Natural killer cell (primary cell): ENCODE measurements at regions of chr22 and their contacts with region 1.

Region 1: GRCh38 chr22:22884010-22884887 is 3.4 kb upstream of the IGLL5 start:
- DNase-seq: peak; percentile 67 to 89
- ATAC-seq: peak; percentile 74 to 95 (median 93)
- H3K4me3 ChIP-seq: no peak overlapping the region
- H3K4me3 Mint-ChIP-seq: no peak overlapping the region
- H3K27ac ChIP-seq: no peak overlapping the region
- H3K27ac Mint-ChIP-seq: peak overlapping the region in 1 of 2 donors; percentile 58
- H3K4me1 ChIP-seq: peaks cover 37% of the 10 kb centered on the region
- H3K4me1 Mint-ChIP-seq: peaks cover 17 to 29% of the 10 kb centered on the region in 2 donors
- H3K27me3 ChIP-seq: peaks cover 4% of the 10 kb centered on the region
- H3K27me3 Mint-ChIP-seq: no peaks in the 10 kb centered on the region
- CTCF ChIP-seq: peak; percentile 82

Region 2: DNA sequence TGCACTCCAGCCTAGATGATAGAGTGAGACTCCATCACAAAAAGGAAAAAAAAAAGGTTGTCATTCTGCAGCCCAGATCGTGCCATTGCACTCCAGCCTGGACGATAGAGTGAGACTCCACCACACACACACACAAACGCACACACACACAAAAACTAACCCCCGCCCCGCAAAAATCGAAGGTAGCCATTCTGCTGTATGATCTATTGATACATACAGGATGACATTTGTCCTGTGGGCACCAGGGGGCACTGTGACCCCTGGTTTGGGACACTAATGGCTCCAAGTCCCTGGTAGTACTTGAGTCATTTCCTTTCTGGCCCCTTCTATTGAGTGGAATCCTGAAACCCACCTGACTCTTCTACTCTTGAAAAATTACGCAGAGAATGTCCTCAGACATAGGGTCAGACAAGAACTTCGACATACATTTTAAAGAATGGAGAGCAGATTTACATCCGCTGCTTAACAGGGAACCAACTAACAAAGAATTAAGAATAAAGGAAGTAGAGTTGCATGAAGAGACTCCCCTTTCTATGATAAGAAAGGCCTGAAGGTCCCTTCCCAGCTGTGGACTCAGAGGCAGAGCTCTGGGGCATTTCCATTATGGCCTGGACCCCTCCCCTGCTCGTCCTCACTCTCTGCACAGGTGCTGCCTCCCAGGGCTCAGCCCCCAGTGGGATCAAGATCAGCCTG is 290.1 kb before region 1 on chr22:
- intact Hi-C with region 1: loop called (anchors 2 kb)
- DNase-seq: peak; percentile 50 to 80
- ATAC-seq: peak; percentile 67 to 88 (median 82)
- H3K4me3 ChIP-seq: no peak overlapping the region
- H3K4me3 Mint-ChIP-seq: no peak overlapping the region
- H3K27ac ChIP-seq: no peak overlapping the region
- H3K27ac Mint-ChIP-seq: no peak overlapping the region
- H3K4me1 ChIP-seq: no peaks in the 10 kb centered on the region
- H3K4me1 Mint-ChIP-seq: peaks cover 6% of the 10 kb centered on the region in 2 donors
- H3K27me3 ChIP-seq: no peaks in the 10 kb centered on the region
- H3K27me3 Mint-ChIP-seq: peaks cover 0 to 4% of the 10 kb centered on the region in 2 donors
- CTCF ChIP-seq: peak; percentile 76

Region 3: GRCh38 chr22:22710719-22711531 is 173.3 kb before region 1 on chr22:
- intact Hi-C with region 1: loop called (anchors 1 kb)
- DNase-seq: peak; percentile 82 to 86
- ATAC-seq: peak; percentile 57 to 82 (median 81)
- H3K4me3 ChIP-seq: no peak overlapping the region
- H3K4me3 Mint-ChIP-seq: peak overlapping the region; percentile 55
- H3K27ac ChIP-seq: no peak overlapping the region
- H3K27ac Mint-ChIP-seq: peak overlapping the region; percentile 8 to 60
- H3K4me1 ChIP-seq: peaks cover 23% of the 10 kb centered on the region
- H3K4me1 Mint-ChIP-seq: peaks cover 0 to 14% of the 10 kb centered on the region in 2 donors
- H3K27me3 ChIP-seq: no peaks in the 10 kb centered on the region
- H3K27me3 Mint-ChIP-seq: no peaks in the 10 kb centered on the region
- CTCF ChIP-seq: peak; percentile 99

Region 4: GRCh38 chr22:22748297-22748743 is 135.9 kb before region 1 on chr22:
- intact Hi-C with region 1: loop called (anchors 1 kb)
- DNase-seq: peak; percentile 31 to 77
- ATAC-seq: peak in 2 of 3 donors; percentile 65 to 80
- H3K4me3 ChIP-seq: no peak overlapping the region
- H3K4me3 Mint-ChIP-seq: peak overlapping the region; percentile 75
- H3K27ac ChIP-seq: no peak overlapping the region
- H3K27ac Mint-ChIP-seq: peak overlapping the region; percentile 75 to 82
- H3K4me1 ChIP-seq: peaks cover 50% of the 10 kb centered on the region
- H3K4me1 Mint-ChIP-seq: peaks cover 54 to 56% of the 10 kb centered on the region in 2 donors
- H3K27me3 ChIP-seq: no peaks in the 10 kb centered on the region
- H3K27me3 Mint-ChIP-seq: peaks cover 0 to 2% of the 10 kb centered on the region in 2 donors
- CTCF ChIP-seq: peak; percentile 84

Region 5: DNA sequence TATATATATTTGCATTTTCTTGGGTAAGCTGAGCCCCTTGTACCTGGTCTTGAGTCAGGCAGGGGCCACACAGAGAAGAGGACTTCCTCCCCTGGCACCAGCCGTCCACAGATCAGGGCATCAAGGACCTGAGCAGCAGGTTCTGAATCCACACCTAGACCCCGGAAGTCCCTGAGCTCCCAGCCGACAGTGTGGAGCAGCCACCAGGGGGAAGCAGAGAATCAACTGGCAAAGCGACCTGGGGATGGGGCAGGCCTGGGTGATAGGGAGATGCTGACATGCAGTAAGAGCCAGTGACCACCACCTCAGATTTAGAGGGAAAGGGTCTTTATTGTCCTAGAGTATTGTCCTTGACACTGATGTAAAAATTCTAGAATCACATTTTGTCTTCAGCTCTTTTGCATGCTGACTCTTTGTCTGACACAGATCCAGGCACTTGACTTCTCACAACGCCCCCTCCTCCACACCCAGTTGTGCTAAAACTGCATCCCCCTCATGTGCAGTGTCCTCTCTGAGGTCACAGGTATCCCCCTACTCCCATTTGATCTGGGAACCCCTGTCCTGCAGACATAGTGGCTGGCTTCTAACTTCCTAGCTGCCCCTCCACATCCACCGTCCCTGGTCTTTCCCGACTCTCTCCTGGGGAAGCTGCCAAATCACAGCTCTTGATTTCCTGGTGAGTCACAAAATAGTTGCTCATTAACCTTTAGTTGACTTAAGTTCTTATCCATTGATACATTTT is 130.6 kb before region 1 on chr22:
- intact Hi-C with region 1: loop called (anchors 1 kb)
- DNase-seq: peak; percentile 73 to 91
- ATAC-seq: peak; percentile 81 to 88 (median 88)
- H3K4me3 ChIP-seq: no peak overlapping the region
- H3K4me3 Mint-ChIP-seq: peak overlapping the region; percentile 64
- H3K27ac ChIP-seq: peak overlapping the region; percentile 39
- H3K27ac Mint-ChIP-seq: peak overlapping the region; percentile 94 to 97
- H3K4me1 ChIP-seq: peaks cover 66% of the 10 kb centered on the region
- H3K4me1 Mint-ChIP-seq: peaks cover 68 to 78% of the 10 kb centered on the region in 2 donors
- H3K27me3 ChIP-seq: no peaks in the 10 kb centered on the region
- H3K27me3 Mint-ChIP-seq: no peaks in the 10 kb centered on the region
- CTCF ChIP-seq: peak; percentile 86

Region 6: GRCh38 chr22:22802339-22802970 is 81.8 kb before region 1 on chr22:
- intact Hi-C with region 1: loop called (anchors 2 kb)
- DNase-seq: peak in 1 of 2 donors; percentile 65
- ATAC-seq: peak; percentile 68 to 73 (median 70)
- H3K4me3 ChIP-seq: no peak overlapping the region
- H3K4me3 Mint-ChIP-seq: no peak overlapping the region
- H3K27ac ChIP-seq: no peak overlapping the region
- H3K27ac Mint-ChIP-seq: peak overlapping the region; percentile 42 to 85
- H3K4me1 ChIP-seq: peaks cover 20% of the 10 kb centered on the region
- H3K4me1 Mint-ChIP-seq: peaks cover 71 to 73% of the 10 kb centered on the region in 2 donors
- H3K27me3 ChIP-seq: no peaks in the 10 kb centered on the region
- H3K27me3 Mint-ChIP-seq: no peaks in the 10 kb centered on the region
- CTCF ChIP-seq: peak; percentile 71

Region 7: GRCh38 chr22:22848364-22848866 is 35.8 kb before region 1 on chr22:
- intact Hi-C with region 1: loop called (anchors 5 kb)
- DNase-seq: peak; percentile 56 to 85
- ATAC-seq: peak; percentile 58 to 90 (median 83)
- H3K4me3 ChIP-seq: no peak overlapping the region
- H3K4me3 Mint-ChIP-seq: no peak overlapping the region
- H3K27ac ChIP-seq: no peak overlapping the region
- H3K27ac Mint-ChIP-seq: peak overlapping the region in 1 of 2 donors; percentile 56
- H3K4me1 ChIP-seq: peaks cover 14% of the 10 kb centered on the region
- H3K4me1 Mint-ChIP-seq: peaks cover 46 to 68% of the 10 kb centered on the region in 2 donors
- H3K27me3 ChIP-seq: no peaks in the 10 kb centered on the region
- H3K27me3 Mint-ChIP-seq: no peaks in the 10 kb centered on the region
- CTCF ChIP-seq: peak; percentile 92